ENCODE measurements at regions of chr17 and their contacts with region 1.

Region 1: DNA sequence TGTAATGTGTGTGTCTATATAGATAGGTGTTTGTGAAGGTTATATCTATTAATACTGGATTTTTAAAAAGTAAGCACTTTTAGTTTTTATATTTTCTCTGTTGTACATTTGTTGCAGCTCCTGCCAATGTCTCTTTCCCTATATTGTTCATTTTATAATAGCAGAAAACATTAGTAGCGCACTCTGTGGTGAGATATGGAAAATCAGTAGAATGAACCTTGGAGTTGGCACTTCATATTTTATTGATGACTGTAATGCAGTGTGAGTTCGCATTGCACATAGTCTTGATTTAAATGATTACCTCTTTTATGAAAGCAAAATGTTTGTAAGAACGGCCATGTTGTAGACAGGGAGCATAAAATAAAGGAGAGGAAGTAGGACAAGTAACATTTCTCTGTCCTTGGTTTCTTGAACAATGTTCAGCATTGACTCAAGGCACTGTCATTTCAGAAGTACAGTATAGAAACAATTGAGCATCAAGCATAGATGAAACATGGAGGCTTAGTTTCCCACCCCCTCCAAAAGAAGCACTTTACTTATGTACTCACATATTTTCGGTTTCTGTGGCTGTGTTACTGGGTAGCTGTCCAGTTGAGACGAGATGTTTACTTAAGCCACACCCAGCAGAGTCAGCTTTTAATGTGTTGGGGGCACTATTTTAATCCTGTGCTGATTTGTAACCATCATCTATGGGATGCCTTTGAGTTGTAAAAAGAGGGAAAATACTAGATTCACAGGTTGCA is 74.0 kb downstream of the TANC2 start:
- DNase-seq: no peak
- CTCF ChIP-seq: no peak

Region 2: GRCh38 chr17:63140255-63140654 is 100.2 kb after region 1 on chr17:
- in situ Hi-C with region 1: loop called (anchors 25 kb)
- DNase-seq: no peak
- CTCF ChIP-seq: no peak